ENCODE measurements at regions of chr3 and their contacts with region 1.

Region 1: GRCh38 chr3:48088749-48089466 is 72.7 kb upstream of the MAP4 start:
- DNase-seq: peak; percentile 97
- ATAC-seq: peak; percentile 92
- H3K4me3 ChIP-seq: peak overlapping the region; percentile 21 to 91 (median 74)
- H3K4me3 Mint-ChIP-seq: peak overlapping the region; percentile 99
- H3K27ac ChIP-seq: peak overlapping the region; percentile 83 to 86
- H3K27ac Mint-ChIP-seq: peak overlapping the region; percentile 98
- H3K4me1 ChIP-seq: peaks cover 17 to 18% of the 10 kb centered on the region in 2 donors
- H3K4me1 Mint-ChIP-seq: peaks cover 32% of the 10 kb centered on the region
- H3K27me3 ChIP-seq: no peaks in the 10 kb centered on the region
- H3K27me3 Mint-ChIP-seq: no peaks in the 10 kb centered on the region
- CTCF ChIP-seq: no peak

Region 2: DNA sequence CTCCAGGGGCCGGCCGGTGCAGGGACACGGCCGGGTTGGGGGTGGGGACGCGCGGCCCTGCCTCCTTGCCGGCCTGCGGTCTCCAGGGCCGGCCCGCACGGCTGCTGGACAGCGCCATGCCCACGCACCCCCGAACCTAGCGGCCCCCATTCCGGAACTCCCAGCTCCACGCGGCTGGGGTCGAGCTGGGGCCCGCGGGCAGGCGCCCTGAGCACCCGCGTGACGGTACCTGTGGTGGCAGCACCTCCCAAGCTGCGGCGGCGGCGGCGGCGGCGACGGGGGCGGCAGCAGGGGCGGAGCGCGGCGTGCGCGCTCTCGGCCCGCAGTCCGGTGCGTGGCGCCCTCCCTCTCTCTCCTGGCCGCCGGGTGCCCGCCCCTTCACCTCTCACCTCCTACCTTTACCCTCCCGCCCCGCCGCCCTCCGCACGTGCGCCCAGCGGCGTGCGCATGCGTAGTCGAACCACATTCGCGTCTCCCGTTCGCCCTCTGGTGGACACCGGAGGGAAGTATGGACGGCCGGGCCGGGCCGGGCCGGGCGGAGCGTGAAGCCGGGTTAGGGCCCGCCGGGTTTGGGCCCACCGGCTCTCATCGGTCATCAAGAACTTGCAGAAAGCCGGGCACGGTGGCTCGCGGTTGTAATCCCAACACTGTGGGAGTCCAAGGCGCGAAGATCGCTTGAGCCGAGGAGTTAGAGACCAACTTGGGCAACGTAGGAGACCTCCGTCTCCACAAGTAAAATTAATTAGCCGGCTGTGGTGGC is 613.2 kb before region 1 on chr3 and contains the start of gene SCAP:
- CTCF ChIA-PET with region 1: no interaction called
- POLR2A ChIA-PET with region 1: no interaction called
- intact Hi-C with region 1: loop called (anchors 2 kb)
- DNase-seq: peak; percentile 97
- ATAC-seq: peak; percentile 94
- H3K4me3 ChIP-seq: peak within 1 kb of the TSS; percentile 68 to 94 (median 81)
- H3K4me3 Mint-ChIP-seq: peak within 1 kb of the TSS; percentile 93
- H3K27ac ChIP-seq: peak within 1 kb of the TSS; percentile 80 to 81
- H3K27ac Mint-ChIP-seq: peak within 1 kb of the TSS; percentile 97
- H3K4me1 ChIP-seq: peaks cover 15 to 24% of the 10 kb centered on the region in 2 donors
- H3K4me1 Mint-ChIP-seq: peaks cover 34% of the 10 kb centered on the region
- H3K27me3 ChIP-seq: no peaks in the 10 kb centered on the region
- H3K27me3 Mint-ChIP-seq: no peaks in the 10 kb centered on the region
- CTCF ChIP-seq: peak; percentile 97
- total RNA-seq, gene SCAP: 100.0 and 113 TPM in 2 replicates

Region 3: GRCh38 chr3:48112813-48113212 is 23.9 kb after region 1 on chr3:
- CTCF ChIA-PET with region 1: no interaction called
- POLR2A ChIA-PET with region 1: no interaction called
- intact Hi-C with region 1: loop called (anchors 1 kb)
- DNase-seq: no peak
- ATAC-seq: peak; percentile 29
- H3K4me3 ChIP-seq: peak overlapping the region in 3 of 5 experiments; percentile 0 to 33 (median 26)
- H3K4me3 Mint-ChIP-seq: peak overlapping the region; percentile 20
- H3K27ac ChIP-seq: peak overlapping the region; percentile 56 to 79
- H3K27ac Mint-ChIP-seq: peak overlapping the region; percentile 37
- H3K4me1 ChIP-seq: peaks cover 14 to 16% of the 10 kb centered on the region in 2 donors
- H3K4me1 Mint-ChIP-seq: peaks cover 10% of the 10 kb centered on the region
- H3K27me3 ChIP-seq: no peaks in the 10 kb centered on the region
- H3K27me3 Mint-ChIP-seq: no peaks in the 10 kb centered on the region
- CTCF ChIP-seq: no peak

Region 4: GRCh38 chr3:48240711-48241491 is 152.0 kb after region 1 on chr3 and contains the start of gene ZNF589:
- CTCF ChIA-PET with region 1: no interaction called
- POLR2A ChIA-PET with region 1: interaction called, 4 read pairs
- intact Hi-C with region 1: loop called (anchors 1 kb)
- DNase-seq: peak; percentile 96
- ATAC-seq: peak; percentile 95
- H3K4me3 ChIP-seq: peak within 1 kb of the TSS; percentile 69 to 95 (median 70)
- H3K4me3 Mint-ChIP-seq: peak within 1 kb of the TSS; percentile 97
- H3K27ac ChIP-seq: peak within 1 kb of the TSS; percentile 78 to 79
- H3K27ac Mint-ChIP-seq: peak within 1 kb of the TSS; percentile 98
- H3K4me1 ChIP-seq: peaks cover 3 to 24% of the 10 kb centered on the region in 2 donors
- H3K4me1 Mint-ChIP-seq: peaks cover 24% of the 10 kb centered on the region
- H3K27me3 ChIP-seq: no peaks in the 10 kb centered on the region
- H3K27me3 Mint-ChIP-seq: no peaks in the 10 kb centered on the region
- CTCF ChIP-seq: peak; percentile 29
- total RNA-seq, gene ZNF589: 29.8 and 34.7 TPM in 2 replicates

Region 5: GRCh38 chr3:48446425-48447193 is 357.7 kb after region 1 on chr3 and contains the start of gene ATRIP:
- CTCF ChIA-PET with region 1: no interaction called
- POLR2A ChIA-PET with region 1: no interaction called
- intact Hi-C with region 1: loop called (anchors 5 kb)
- DNase-seq: peak; percentile 89
- ATAC-seq: peak; percentile 99
- H3K4me3 ChIP-seq: peak within 1 kb of the TSS; percentile 50 to 82 (median 73)
- H3K4me3 Mint-ChIP-seq: peak within 1 kb of the TSS; percentile 91
- H3K27ac ChIP-seq: peak within 1 kb of the TSS; percentile 37 to 69
- H3K27ac Mint-ChIP-seq: peak within 1 kb of the TSS; percentile 91
- H3K4me1 ChIP-seq: peaks cover 20 to 27% of the 10 kb centered on the region in 2 donors
- H3K4me1 Mint-ChIP-seq: peaks cover 37% of the 10 kb centered on the region
- H3K27me3 ChIP-seq: no peaks in the 10 kb centered on the region
- H3K27me3 Mint-ChIP-seq: no peaks in the 10 kb centered on the region
- CTCF ChIP-seq: no peak
- total RNA-seq, gene ATRIP: 11.6 and 14.3 TPM in 2 replicates

Measured in B cell (primary cell).